Natural killer cell (primary cell): ENCODE measurements at regions of chrX and their contacts with region 1.

Region 1: GRCh38 chrX:153507484-153508178 is 9.8 kb upstream of the ATP2B3 start:
- DNase-seq: peak; percentile 75 to 89
- ATAC-seq: peak; percentile 92 to 99 (median 98)
- H3K4me3 ChIP-seq: no peak overlapping the region
- H3K4me3 Mint-ChIP-seq: no peak overlapping the region
- H3K27ac ChIP-seq: no peak overlapping the region
- H3K27ac Mint-ChIP-seq: peak overlapping the region in 1 of 2 donors; percentile 36
- H3K4me1 ChIP-seq: peaks cover 6% of the 10 kb centered on the region
- H3K4me1 Mint-ChIP-seq: peaks cover 4% of the 10 kb centered on the region in 2 donors
- H3K27me3 ChIP-seq: no peaks in the 10 kb centered on the region
- H3K27me3 Mint-ChIP-seq: peaks cover 0 to 2% of the 10 kb centered on the region in 2 donors
- CTCF ChIP-seq: peak; percentile 58

Region 2: GRCh38 chrX:152941328-152942106 is 566.1 kb before region 1 on chrX:
- intact Hi-C with region 1: loop called (anchors 1 kb)
- DNase-seq: peak; percentile 86 to 95
- ATAC-seq: peak; percentile 97 to 98 (median 98)
- H3K4me3 ChIP-seq: peak overlapping the region; percentile 49
- H3K4me3 Mint-ChIP-seq: peak overlapping the region; percentile 80
- H3K27ac ChIP-seq: peak overlapping the region; percentile 82
- H3K27ac Mint-ChIP-seq: peak overlapping the region; percentile 83 to 90
- H3K4me1 ChIP-seq: peaks cover 11% of the 10 kb centered on the region
- H3K4me1 Mint-ChIP-seq: peaks cover 5 to 8% of the 10 kb centered on the region in 2 donors
- H3K27me3 ChIP-seq: no peaks in the 10 kb centered on the region
- H3K27me3 Mint-ChIP-seq: peaks cover 0 to 6% of the 10 kb centered on the region in 2 donors
- CTCF ChIP-seq: peak; percentile 73

Region 3: DNA sequence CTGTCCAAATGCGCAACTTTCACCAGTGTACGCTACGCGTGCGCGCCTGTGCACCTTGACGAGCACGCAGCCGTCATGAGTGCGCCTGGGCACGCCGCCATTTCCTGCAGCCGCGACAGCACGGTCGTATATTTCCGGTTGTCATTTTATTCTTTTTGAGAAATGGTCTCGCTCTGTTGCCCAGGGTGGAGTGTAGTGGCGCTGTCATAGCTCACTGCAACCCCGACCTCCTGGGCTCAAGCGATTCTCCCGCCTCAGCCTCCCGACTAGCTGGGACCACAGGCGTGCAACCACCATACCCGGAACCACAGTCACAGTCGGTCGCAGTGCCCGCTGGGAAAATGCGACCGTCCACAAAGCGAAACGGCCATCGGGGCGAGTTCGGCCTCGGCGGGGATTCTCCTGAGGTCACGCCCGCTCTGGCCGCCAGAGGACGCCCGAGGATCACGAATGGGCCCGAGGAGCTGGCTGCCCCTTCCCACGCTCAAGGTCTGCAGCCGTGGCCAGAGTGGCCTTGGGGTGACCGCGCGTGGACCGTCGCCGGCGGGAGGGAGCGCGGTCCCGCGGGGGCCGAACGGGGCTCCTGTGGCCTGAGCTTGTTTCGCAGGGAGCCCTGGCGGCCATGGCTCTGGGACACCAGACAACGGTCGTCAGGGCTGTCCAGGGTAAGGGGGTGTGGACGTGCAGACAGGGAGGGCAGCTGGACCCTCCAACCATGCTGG is 475.1 kb before region 1 on chrX:
- intact Hi-C with region 1: loop called (anchors 2 kb)
- DNase-seq: peak; percentile 67 to 69
- ATAC-seq: peak; percentile 86 to 90 (median 86)
- H3K4me3 ChIP-seq: peak overlapping the region; percentile 51
- H3K4me3 Mint-ChIP-seq: peak overlapping the region; percentile 83
- H3K27ac ChIP-seq: peak overlapping the region; percentile 63
- H3K27ac Mint-ChIP-seq: peak overlapping the region; percentile 80
- H3K4me1 ChIP-seq: peaks cover 8% of the 10 kb centered on the region
- H3K4me1 Mint-ChIP-seq: no peaks in the 10 kb centered on the region
- H3K27me3 ChIP-seq: no peaks in the 10 kb centered on the region
- H3K27me3 Mint-ChIP-seq: no peaks in the 10 kb centered on the region
- CTCF ChIP-seq: peak; percentile 67

Region 4: GRCh38 chrX:153333768-153334645 is 173.6 kb before region 1 on chrX and contains the start of gene ZNF275:
- intact Hi-C with region 1: loop called (anchors 5 kb)
- DNase-seq: peak; percentile 82 to 90
- ATAC-seq: peak; percentile 97 to 99 (median 98)
- H3K4me3 ChIP-seq: peak within 1 kb of the TSS; percentile 80
- H3K4me3 Mint-ChIP-seq: peak within 1 kb of the TSS; percentile 84
- H3K27ac ChIP-seq: peak within 1 kb of the TSS; percentile 30
- H3K27ac Mint-ChIP-seq: peak within 1 kb of the TSS; percentile 57 to 79
- H3K4me1 ChIP-seq: peaks cover 19% of the 10 kb centered on the region
- H3K4me1 Mint-ChIP-seq: peaks cover 5 to 20% of the 10 kb centered on the region in 2 donors
- H3K27me3 ChIP-seq: no peaks in the 10 kb centered on the region
- H3K27me3 Mint-ChIP-seq: peaks cover 0 to 16% of the 10 kb centered on the region in 2 donors
- CTCF ChIP-seq: no peak
- total RNA-seq, gene ZNF275: 9.1 to 17.4 (median 17.3) TPM

Region 5: DNA sequence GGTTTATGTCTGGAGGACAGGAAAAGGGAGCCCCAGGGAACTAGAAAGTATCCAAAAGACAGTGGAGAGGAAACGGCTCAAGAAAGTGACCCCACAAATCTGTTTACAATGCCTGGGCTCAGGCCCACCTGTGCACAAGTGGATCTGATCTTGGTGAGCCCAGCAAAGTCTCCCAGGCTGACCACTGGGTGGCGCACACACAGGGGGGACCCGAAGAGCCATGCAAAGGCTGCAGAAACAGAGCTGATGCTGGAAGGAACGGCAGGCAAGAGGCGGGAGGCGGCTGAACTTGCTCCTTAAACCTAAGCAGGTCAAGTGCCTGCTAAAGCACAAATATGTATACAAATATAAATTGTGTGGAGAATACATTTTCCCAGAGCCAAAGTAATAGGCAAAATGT is 46.8 kb before region 1 on chrX:
- intact Hi-C with region 1: loop called (anchors 2 kb)
- DNase-seq: peak; percentile 22 to 64
- ATAC-seq: peak in 2 of 3 donors; percentile 54 to 55
- H3K4me3 ChIP-seq: no peak overlapping the region
- H3K4me3 Mint-ChIP-seq: no peak overlapping the region
- H3K27ac ChIP-seq: no peak overlapping the region
- H3K27ac Mint-ChIP-seq: no peak overlapping the region
- H3K4me1 ChIP-seq: no peaks in the 10 kb centered on the region
- H3K4me1 Mint-ChIP-seq: peaks cover 0 to 4% of the 10 kb centered on the region in 2 donors
- H3K27me3 ChIP-seq: no peaks in the 10 kb centered on the region
- H3K27me3 Mint-ChIP-seq: no peaks in the 10 kb centered on the region
- CTCF ChIP-seq: no peak

Region 6: DNA sequence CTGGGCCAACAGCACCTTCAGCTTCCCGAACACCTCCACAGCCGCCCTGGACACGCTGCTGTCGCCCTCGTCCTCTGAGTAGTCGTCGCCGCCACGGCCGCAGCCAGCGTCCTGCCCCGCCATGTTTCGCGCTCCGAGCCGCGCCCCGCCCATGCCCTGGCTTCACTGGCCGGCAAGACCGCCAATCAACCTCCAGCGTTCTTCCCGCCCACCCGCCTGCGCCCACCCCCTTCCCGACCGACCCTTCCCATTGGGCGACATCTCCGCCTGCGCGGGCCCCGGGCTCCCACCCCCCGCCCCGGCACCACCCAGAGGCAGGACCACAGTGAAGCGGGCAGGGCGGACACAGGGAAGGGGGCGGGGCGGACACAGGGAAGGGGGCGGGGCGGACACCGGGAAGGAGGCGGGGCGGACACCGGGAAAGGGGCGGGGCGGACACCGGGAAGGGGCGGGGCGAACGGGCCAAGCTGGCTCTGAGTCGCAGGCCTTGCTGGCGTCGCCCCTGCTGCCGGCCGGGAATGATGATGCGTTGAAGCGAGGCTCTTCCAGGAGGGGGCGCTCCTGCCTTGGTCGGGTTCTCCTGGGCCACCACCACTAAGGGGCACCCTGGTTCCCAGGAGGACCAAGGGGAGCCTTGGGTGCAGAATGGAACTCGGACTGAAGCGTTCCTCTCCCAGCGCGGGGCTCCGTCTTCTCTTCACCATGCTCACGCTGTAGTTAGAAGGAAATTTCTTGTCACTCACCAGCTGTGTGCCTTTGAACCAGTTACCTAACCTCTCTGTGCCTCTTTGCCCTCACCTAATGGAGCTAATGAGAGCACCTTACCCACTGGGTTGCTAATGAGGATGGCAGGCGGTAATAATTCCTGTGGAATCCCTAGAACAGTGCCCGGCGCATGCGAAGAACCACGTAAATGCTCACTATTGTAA is 36.9 kb before region 1 on chrX and contains the start of gene HAUS7:
- intact Hi-C with region 1: loop called (anchors 5 kb)
- DNase-seq: peak; percentile 76 to 93
- ATAC-seq: peak; percentile 81 to 92 (median 84)
- H3K4me3 ChIP-seq: peak within 1 kb of the TSS; percentile 69
- H3K4me3 Mint-ChIP-seq: peak within 1 kb of the TSS; percentile 86
- H3K27ac ChIP-seq: peak within 1 kb of the TSS; percentile 45
- H3K27ac Mint-ChIP-seq: peak within 1 kb of the TSS; percentile 45 to 66
- H3K4me1 ChIP-seq: peaks cover 34% of the 10 kb centered on the region
- H3K4me1 Mint-ChIP-seq: peaks cover 0 to 7% of the 10 kb centered on the region in 2 donors
- H3K27me3 ChIP-seq: no peaks in the 10 kb centered on the region
- H3K27me3 Mint-ChIP-seq: no peaks in the 10 kb centered on the region
- CTCF ChIP-seq: peak; percentile 43
- total RNA-seq, gene HAUS7: 27.4 to 33.1 (median 31.9) TPM